ENCODE measurements at regions of chr2 and their contacts with region 1.

Region 1: GRCh38 chr2:219119422-219120043 is 41.1 kb downstream of the NHEJ1 start:
- DNase-seq: peak; percentile 83

Region 2: GRCh38 chr2:218861645-218862318 is 257.8 kb before region 1 on chr2:
- intact Hi-C with region 1: no loop called
- DNase-seq: peak; percentile 19

Region 3: GRCh38 chr2:218876562-218877219 is 242.8 kb before region 1 on chr2:
- intact Hi-C with region 1: no loop called
- DNase-seq: no peak

Region 4: GRCh38 chr2:219073413-219074129 is 46.0 kb before region 1 on chr2:
- intact Hi-C with region 1: loop called (anchors 5 kb)
- DNase-seq: no peak

Measured in cardiac septum (tissue), 1 donor.